Psoas muscle (tissue), 8 donors: ENCODE measurements at regions of chr9 and their contacts with region 1.

Region 1: GRCh38 chr9:87324613-87325194 is 173.0 kb upstream of the DAPK1 start:
- DNase-seq: no peak
- ATAC-seq: peak; percentile 62 to 89 (median 76)
- H3K4me3 ChIP-seq: no peak overlapping the region
- H3K27ac ChIP-seq: no peak overlapping the region
- H3K4me1 ChIP-seq: no peaks in the 10 kb centered on the region
- H3K27me3 ChIP-seq: no peaks in the 10 kb centered on the region
- CTCF ChIP-seq: peak; percentile 89

Region 2: DNA sequence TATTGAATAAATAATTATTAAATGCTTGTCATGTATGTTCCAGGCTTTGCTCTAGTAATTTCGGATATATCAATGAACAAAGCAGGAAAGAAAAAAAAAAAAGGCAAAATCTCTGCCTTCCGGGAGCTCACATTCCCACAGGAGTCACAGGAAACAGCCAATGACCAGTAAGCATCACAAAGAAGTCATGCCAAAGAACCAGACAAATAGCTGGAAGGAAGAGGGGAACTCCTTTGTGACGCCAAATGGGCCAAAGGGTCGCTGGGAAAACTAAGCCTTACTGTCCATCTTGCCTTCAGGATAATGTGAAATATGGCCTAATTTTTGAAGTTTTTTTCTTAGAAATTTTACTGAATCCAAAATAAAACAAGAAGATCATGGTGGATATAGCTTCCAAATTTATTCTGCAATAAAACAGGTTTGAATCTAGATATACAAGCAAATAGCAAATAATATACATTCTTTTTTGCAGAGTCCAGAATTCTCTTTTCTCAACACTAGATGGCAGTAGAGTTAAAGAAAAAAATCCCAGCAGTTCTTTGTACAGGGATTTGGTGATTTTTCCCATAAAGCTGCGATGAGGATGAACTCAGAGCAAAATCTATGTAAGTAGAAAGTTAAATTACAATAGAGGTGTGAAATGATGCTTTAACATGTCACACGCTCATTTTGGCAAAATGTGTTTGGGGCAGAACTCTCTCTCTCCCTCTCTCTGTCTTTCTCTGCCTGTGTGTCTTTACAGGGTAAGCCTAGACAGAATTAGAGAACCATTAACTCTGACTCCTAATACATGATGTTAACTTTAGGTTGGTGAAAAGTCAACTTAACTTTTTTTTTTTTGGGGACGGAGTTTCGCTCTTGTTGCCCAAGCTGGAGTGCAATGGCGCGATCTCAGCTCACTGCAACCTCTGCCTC is 910.5 kb before region 1 on chr9:
- intact Hi-C with region 1: loop called (anchors 5 kb)
- DNase-seq: no peak
- ATAC-seq: peak in 1 of 4 donors; percentile 64
- H3K4me3 ChIP-seq: no peak overlapping the region
- H3K27ac ChIP-seq: no peak overlapping the region
- H3K4me1 ChIP-seq: no peaks in the 10 kb centered on the region
- H3K27me3 ChIP-seq: no peaks in the 10 kb centered on the region
- CTCF ChIP-seq: peak; percentile 73

Region 3: GRCh38 chr9:86434039-86434726 is 890.5 kb before region 1 on chr9:
- intact Hi-C with region 1: loop called (anchors 5 kb)
- DNase-seq: peak; percentile 60 to 74
- ATAC-seq: peak; percentile 39 to 68 (median 60)
- H3K4me3 ChIP-seq: no peak overlapping the region
- H3K27ac ChIP-seq: no peak overlapping the region
- H3K4me1 ChIP-seq: no peaks in the 10 kb centered on the region
- H3K27me3 ChIP-seq: no peaks in the 10 kb centered on the region
- CTCF ChIP-seq: peak; percentile 72

Region 4: GRCh38 chr9:86486891-86487837 is 837.5 kb before region 1 on chr9:
- intact Hi-C with region 1: loop called in 1 of 2 experiments (anchors 2 kb)
- DNase-seq: no peak
- ATAC-seq: peak in 3 of 4 donors; percentile 40 to 78 (median 51)
- H3K4me3 ChIP-seq: no peak overlapping the region
- H3K27ac ChIP-seq: no peak overlapping the region
- H3K4me1 ChIP-seq: no peaks in the 10 kb centered on the region
- H3K27me3 ChIP-seq: no peaks in the 10 kb centered on the region
- CTCF ChIP-seq: peak; percentile 68

Region 5: DNA sequence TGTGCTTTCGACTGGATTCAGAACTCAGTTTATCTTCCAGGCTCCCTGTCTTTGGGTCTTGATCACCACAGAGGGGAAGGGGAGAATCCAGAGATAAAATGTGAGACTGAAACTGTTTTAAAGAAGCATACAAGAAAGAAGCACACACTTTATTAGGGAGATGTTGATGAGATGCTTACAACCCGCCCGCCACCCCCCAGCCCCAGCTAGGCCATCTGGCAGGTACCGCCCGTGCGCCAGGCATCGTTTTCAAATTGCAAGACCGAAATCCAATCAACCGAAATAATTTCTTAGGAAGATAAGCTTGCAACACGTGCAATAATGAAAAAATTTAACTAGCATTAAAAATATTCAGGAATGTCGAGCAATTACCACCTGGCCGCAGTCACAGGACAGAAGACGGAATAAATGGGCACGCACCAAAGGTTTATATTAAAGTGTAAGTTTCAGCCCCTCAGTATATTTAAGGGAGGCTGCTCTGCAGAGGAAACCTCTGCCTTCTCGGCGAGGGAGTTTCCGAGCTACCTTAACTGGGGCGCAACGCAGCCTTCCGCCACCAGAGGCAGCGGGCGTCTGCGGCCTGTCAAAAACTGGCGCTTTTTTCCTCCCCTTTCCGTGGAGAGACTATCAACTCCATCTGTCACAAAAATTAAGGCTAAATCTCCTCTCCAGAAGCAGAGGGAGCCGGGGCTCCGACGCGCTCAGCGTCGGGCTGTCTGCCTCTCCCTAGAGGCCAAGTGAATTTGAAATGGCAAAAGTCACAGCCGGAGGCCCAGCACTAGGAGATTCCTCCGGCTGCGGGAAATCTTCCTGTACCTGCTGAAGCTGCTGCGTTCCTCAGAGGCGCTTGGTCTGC is 376.4 kb before region 1 on chr9:
- intact Hi-C with region 1: loop called (anchors 5 to 10 kb)
- DNase-seq: peak; percentile 83 to 88
- ATAC-seq: peak; percentile 73 to 85 (median 76)
- H3K4me3 ChIP-seq: peak overlapping the region; percentile 86
- H3K27ac ChIP-seq: peak overlapping the region; percentile 83
- H3K4me1 ChIP-seq: peaks cover 6% of the 10 kb centered on the region
- H3K27me3 ChIP-seq: peaks cover 0 to 12% (median 0%) of the 10 kb centered on the region in 3 donors
- CTCF ChIP-seq: peak; percentile 91

Region 6: DNA sequence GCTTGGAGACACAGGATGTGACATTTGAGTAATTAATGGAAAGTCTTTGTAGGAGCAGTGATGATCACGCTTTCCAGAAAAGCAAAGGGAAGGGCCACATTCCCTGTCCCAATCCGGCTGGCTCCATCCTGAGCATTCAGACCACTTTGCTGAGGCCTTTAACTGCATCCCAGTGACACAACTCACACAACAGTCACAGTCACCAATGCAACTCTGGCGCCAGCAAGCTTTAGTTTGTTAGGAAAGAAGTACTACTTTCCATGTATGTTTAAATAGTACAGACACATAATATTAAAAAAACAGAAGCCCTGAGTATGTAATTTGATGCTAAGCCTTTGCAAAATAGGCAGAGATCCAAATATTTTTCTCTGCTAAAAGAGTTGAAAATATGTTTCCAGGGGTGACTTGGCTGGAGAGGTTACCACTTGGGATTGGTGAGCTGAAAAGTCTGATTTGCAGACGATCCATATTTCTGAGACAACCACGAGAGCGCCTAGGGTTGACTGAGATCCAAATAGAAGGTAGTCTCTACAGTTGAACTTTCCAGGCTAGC is 345.7 kb before region 1 on chr9:
- intact Hi-C with region 1: loop called (anchors 10 kb)
- DNase-seq: no peak
- ATAC-seq: no peak
- H3K4me3 ChIP-seq: no peak overlapping the region
- H3K27ac ChIP-seq: no peak overlapping the region
- H3K4me1 ChIP-seq: peaks cover 8% of the 10 kb centered on the region
- H3K27me3 ChIP-seq: no peaks in the 10 kb centered on the region
- CTCF ChIP-seq: no peak

Region 7: DNA sequence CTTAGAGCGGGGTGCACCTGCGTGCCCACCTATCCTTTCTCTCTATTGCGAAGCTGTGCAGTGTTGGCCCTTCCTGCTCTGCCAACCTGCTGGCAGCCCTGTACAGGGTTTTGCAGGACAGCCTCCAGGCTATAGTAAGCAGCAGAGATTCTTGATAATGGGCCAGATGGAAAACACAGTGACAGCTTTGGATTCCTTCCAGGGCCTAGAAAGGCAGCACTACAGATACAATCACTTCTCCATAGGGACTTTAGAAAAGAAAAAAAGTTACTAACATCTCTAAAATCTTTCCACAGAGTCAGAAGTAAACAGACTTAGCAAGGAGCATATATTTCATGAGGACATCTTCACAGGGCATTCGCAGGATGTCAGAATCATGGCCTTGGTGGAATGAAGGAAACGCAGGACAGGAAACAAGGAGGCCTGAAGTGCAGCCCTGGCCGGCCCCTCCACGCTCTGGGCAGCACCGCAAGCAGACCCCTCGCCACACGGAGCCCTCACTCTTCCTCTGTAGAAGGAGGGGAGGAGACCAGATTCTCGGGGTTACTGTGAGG is 205.3 kb before region 1 on chr9:
- intact Hi-C with region 1: loop called in 1 of 2 experiments (anchors 10 kb)
- DNase-seq: peak in 1 of 2 donors; percentile 46
- ATAC-seq: peak; percentile 52 to 78 (median 75)
- H3K4me3 ChIP-seq: no peak overlapping the region
- H3K27ac ChIP-seq: peak overlapping the region; percentile 39
- H3K4me1 ChIP-seq: peaks cover 32% of the 10 kb centered on the region
- H3K27me3 ChIP-seq: no peaks in the 10 kb centered on the region
- CTCF ChIP-seq: no peak